Common myeloid progenitor, CD34-positive (primary cell): ENCODE measurements at regions of chr11 and their contacts with region 1.

Region 1: DNA sequence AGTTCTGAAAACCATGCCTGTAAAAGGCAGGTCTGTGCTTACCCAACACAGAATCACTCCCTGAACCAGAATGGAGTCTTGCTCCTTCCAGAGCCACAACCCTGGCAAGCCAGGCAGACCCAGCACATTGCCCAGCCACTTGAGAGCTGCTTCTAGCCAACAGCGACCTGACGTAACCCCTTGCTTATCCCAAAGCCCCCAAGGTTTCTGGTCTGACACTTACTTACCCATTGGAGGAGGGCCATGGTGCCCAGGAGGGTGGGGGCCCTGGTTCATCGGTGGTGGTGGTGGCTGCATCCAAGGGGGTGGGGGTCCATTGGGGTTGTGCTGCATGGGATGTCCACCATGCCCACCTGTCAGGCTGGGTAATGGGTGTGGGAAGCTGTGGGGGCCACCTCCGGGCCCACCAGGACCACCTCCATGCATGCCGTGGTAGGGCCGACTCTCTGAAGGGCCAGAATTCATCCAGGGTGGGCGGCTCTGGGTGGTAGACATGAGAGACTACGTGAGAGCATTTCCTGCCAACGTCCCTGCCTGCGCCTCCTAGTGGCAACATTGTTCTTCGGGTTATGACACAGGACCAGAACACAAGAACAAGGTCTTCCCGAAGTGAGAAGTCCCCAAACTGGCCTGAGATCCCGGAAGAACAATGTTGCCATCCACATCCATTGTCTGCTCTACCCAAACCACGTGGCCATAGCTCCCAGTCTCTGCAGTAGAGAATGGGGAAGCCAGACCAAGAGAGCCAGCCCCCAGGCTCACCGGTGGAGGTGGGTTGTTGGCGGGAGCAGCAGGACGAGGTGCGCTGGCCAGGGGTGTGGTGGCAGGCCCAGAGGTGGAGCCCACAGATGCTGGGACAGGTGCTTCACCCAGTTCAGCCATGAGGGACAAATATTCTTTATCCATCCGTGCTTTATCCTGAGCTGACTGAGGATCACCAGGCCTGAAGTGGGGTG is 7.8 kb upstream of the PYGM start:
- DNase-seq: peak; percentile 77 to 88 (median 84)
- H3K4me3 ChIP-seq: no peak overlapping the region
- H3K27ac ChIP-seq: peak overlapping the region; percentile 16 to 52
- H3K4me1 ChIP-seq: peaks cover 20 to 66% (median 53%) of the 10 kb centered on the region in 4 experiments
- H3K27me3 ChIP-seq: no peaks in the 10 kb centered on the region

Region 2: DNA sequence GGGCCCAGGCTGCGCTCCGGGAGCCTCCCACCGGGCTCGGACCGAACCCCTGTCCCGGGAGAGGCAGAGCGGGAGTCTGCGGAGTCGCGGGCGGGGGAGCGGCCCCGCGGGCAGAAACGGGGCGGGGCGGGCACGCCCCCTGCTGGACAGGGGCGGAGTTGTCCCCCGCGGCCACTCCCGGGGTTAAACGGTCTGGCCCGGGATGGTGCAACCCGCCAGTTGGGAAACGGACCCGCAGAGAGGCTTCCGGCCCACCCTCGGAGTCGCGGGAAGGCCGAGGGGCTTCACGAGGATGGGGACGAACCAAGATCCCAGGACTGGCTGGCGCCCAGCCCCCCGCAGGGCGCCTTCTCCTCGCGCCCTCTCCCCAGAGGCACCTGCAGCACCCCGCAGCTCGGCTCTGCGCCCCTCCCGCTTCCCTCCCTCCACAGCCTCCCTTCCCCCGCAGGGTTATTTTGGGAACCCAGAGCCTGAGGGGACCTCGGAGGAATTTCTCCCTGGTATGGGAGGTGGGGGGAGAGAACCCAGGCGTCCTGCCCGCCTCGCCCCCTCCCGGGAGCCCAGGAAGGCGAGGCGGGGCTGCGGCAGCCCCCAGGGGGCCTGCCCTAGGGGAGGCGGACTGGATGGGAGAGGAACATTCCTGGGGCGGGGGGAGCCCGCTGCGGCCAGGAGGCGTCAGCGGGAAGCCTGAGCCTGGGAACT is 24.6 kb before region 1 on chr11:
- CTCF ChIA-PET with region 1: interaction called, 345 read pairs
- POLR2A ChIA-PET with region 1: interaction called, 152 read pairs
- DNase-seq: peak; percentile 54 to 72 (median 66)
- H3K4me3 ChIP-seq: peak overlapping the region; percentile 70 to 90 (median 85)
- H3K27ac ChIP-seq: peak overlapping the region in 1 of 2 experiments; percentile 74
- H3K4me1 ChIP-seq: peaks cover 0 to 54% (median 42%) of the 10 kb centered on the region in 4 experiments
- H3K27me3 ChIP-seq: no peaks in the 10 kb centered on the region

Region 3: DNA sequence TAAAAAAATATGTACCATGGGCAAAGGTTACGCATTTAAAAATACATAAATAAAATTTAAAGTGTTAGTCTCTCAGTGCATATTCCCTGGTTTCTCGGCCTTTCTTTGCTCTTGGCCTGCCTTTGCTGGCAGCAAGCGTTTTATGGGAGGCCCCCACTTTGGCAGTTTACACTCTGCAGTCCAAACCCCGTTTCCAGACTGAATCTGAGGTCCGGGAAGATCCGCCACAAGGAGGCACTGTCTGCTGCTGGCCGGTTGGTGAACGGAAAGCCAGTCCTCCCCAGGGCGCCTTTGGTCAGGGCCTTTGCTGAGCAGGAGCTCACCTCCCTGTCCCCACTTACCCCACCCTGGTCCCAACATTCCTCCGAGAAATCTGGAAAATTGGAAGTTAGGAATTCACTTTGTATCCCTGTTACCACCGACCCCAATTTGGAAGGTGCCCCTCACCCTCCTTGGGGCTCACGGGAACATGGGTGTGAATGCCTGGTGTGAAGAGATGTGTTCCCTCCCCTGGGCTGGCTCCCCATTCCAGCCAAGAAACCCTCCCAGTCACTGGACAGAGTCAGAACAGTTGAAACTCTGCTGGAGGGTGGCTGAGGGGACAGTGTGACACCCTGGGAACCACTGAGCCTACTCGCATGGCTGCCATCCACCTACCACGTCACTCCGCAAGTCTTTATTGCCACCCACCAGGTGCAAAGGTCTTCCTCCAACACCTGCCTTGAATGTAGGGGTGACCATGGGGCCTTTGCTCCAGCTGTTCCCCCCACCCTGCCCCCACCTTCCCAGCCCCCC is 20.1 kb after region 1 on chr11:
- CTCF ChIA-PET with region 1: interaction called, 11 read pairs
- POLR2A ChIA-PET with region 1: no interaction called
- DNase-seq: peak; percentile 50 to 76 (median 72)
- H3K4me3 ChIP-seq: no peak overlapping the region
- H3K27ac ChIP-seq: no peak overlapping the region
- H3K4me1 ChIP-seq: peaks cover 0 to 5% (median 2%) of the 10 kb centered on the region in 4 experiments
- H3K27me3 ChIP-seq: no peaks in the 10 kb centered on the region